ENCODE measurements at regions of chr12 and their contacts with region 1.

Region 1: DNA sequence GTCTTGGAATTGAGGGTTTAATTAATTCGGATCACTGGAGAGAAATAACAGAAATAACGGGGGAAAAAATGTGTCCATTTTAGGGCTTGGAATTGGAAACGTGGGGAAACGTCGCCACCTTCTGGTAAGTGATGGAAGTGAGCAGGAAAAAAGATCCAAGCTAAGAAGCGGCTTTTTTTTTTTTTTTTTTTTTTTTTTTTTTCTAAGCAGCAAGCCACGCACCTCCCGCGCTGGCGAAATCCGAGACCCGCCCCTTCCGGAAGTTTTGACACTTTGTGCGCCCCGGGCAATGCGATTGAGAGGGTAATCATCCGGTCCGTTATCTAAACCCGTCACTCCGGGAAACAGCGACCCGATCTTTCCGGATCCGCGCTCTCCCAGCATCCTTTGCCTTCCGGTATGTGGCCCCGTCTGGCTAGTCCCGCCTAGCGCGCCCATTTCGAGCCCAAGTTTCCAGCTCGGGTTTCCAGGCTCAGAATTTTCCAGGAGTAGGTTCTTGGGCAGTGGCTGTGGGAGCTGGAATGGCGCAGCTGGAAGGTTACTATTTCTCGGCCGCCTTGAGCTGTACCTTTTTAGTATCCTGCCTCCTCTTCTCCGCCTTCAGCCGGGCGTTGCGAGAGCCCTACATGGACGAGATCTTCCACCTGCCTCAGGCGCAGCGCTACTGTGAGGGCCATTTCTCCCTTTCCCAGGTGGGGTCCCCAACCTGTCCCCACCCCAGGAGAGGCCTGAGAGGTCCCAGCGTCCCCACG is at the start of gene ALG10:
- DNase-seq: peak; percentile 97
- H3K4me3 ChIP-seq: peak within 1 kb of the TSS; percentile 52 to 94 (median 78)
- H3K27ac ChIP-seq: peak within 1 kb of the TSS; percentile 77
- H3K4me1 ChIP-seq: peaks cover 5% of the 10 kb centered on the region
- H3K27me3 ChIP-seq: no peaks in the 10 kb centered on the region
- CTCF ChIP-seq: peak; percentile 52 to 62
- total RNA-seq, gene ALG10: 12.6 to 18.7 TPM

Region 2: DNA sequence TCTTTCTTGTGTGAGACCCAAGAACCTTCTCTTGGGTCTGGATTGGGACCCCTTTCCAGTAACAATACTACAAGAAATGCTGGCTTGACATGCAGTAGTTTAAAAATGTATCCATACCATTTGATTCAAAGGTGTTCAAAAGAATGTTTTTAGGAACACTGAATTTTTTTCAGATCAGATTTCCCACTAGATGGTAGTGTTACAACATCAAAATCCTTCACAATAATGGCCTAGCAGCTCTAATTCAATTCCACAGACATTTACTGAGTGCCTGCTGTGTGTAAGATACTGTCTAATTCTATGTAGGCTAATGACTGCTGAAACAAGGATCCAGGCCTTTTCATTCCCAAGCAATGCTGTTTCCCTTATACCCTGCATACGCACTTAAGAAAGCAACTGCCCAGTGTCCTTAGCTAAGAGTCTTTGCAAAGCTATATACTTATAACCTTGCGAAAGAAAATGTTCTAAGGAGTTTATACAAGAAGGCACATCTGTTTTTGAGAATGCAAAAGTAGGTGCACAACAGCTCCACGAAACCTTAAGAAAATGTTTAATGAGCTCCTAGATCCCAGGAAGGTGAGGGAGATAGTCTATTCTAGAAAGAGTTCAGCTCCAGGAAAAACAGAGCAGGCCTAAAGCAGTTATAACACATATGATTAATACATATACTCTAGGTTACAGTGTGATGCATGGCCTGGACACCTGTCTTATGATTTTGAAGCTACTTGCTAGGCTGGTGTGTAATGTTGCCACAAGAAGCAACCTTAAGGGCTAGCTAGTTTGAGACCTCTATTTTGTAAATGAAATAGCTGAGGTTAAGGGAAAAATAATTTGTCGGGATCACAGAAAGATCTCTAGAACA is 1074.8 kb before region 1 on chr12:
- CTCF ChIA-PET with region 1: interaction called, 10 read pairs
- dilution Hi-C with region 1: no loop called
- in situ Hi-C with region 1: loop called (anchors 25 kb)
- intact Hi-C with region 1: loop called (anchors 1 kb)
- DNase-seq: peak; percentile 34
- H3K4me3 ChIP-seq: no peak overlapping the region
- H3K27ac ChIP-seq: no peak overlapping the region
- H3K4me1 ChIP-seq: peaks cover 11% of the 10 kb centered on the region
- H3K27me3 ChIP-seq: no peaks in the 10 kb centered on the region
- CTCF ChIP-seq: peak; percentile 10 to 36

Region 3: GRCh38 chr12:33427072-33427471 is 595.2 kb before region 1 on chr12:
- CTCF ChIA-PET with region 1: no interaction called
- dilution Hi-C with region 1: no loop called
- in situ Hi-C with region 1: loop called in 1 of 2 experiments (anchors 10 kb)
- intact Hi-C with region 1: loop called (anchors 1 kb)
- DNase-seq: peak; percentile 45
- H3K4me3 ChIP-seq: no peak overlapping the region
- H3K27ac ChIP-seq: no peak overlapping the region
- H3K4me1 ChIP-seq: no peaks in the 10 kb centered on the region
- H3K27me3 ChIP-seq: peaks cover 2% of the 10 kb centered on the region
- CTCF ChIP-seq: peak; percentile 50 to 63

Region 4: GRCh38 chr12:33546006-33546405 is 476.2 kb before region 1 on chr12:
- CTCF ChIA-PET with region 1: no interaction called
- dilution Hi-C with region 1: no loop called
- in situ Hi-C with region 1: no loop called
- intact Hi-C with region 1: no loop called
- DNase-seq: no peak
- H3K4me3 ChIP-seq: no peak overlapping the region
- H3K27ac ChIP-seq: no peak overlapping the region
- H3K4me1 ChIP-seq: no peaks in the 10 kb centered on the region
- H3K27me3 ChIP-seq: no peaks in the 10 kb centered on the region
- CTCF ChIP-seq: no peak

Region 5: DNA sequence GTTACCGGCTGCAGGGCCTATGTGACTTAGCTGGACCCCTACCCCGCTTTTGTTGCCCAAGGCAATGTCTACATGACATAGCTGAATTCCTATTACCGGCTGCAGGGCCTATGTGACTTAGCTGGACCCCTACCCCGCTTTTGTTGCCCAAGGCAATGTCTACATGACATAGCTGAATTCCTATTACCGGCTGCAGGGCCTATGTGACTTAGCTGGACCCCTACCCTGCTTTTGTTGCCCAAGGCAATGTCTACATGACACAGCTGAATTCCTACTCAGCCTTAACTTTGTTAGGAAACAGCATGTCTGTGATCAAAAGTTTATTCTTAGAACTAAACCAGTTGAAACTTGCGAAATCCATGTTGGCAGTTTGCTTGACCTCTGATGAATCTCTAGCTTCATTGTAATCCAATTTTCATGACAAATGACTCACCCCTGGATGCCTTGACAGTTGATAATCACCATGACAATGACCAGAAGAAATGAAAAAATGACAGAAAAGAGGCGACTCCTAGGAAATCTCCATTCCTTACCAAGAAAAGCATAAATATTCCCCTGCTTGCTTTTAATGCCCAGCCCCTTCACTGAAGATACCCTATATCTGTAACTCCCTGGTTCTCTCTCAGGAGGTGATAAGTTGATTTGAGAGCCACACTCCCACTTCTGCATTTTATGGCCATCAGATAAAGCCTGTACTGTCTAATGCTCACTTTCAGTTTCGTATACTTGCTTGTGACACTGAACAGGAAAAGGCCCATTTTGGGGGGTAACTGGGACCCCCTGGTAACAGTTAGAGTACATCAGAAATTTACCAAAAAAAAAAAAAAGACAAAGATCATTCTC is 434.2 kb before region 1 on chr12:
- CTCF ChIA-PET with region 1: no interaction called
- dilution Hi-C with region 1: no loop called
- in situ Hi-C with region 1: loop called in 1 of 2 experiments (anchors 25 kb)
- intact Hi-C with region 1: no loop called
- DNase-seq: peak; percentile 93
- H3K4me3 ChIP-seq: no peak overlapping the region
- H3K27ac ChIP-seq: peak overlapping the region; percentile 78
- H3K4me1 ChIP-seq: peaks cover 26% of the 10 kb centered on the region
- H3K27me3 ChIP-seq: no peaks in the 10 kb centered on the region
- CTCF ChIP-seq: no peak

Region 6: GRCh38 chr12:33605751-33606150 is 416.5 kb before region 1 on chr12:
- CTCF ChIA-PET with region 1: no interaction called
- dilution Hi-C with region 1: no loop called
- in situ Hi-C with region 1: no loop called
- intact Hi-C with region 1: loop called (anchors 5 kb)
- DNase-seq: peak; percentile 30
- H3K4me3 ChIP-seq: no peak overlapping the region
- H3K27ac ChIP-seq: no peak overlapping the region
- H3K4me1 ChIP-seq: no peaks in the 10 kb centered on the region
- H3K27me3 ChIP-seq: no peaks in the 10 kb centered on the region
- CTCF ChIP-seq: peak; percentile 51 to 71

Region 7: DNA sequence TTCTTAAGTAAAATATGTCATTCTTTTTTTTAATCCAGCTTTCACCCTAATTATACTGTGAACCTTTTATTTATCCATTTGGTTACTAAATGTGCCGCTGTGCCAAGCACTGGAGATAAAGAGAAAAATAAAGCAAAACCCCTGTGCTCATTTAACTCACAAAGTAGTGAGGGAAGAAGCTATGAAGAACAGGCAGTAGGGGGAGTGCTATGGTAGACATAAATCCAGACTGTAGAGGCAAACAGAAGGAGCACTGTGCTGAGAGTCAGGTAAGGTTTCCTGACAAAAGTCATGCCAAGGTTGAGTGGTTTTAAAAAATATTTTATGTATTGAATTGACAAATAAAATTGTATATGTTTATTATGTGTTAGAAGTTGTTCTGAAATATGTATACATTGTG is 394.2 kb before region 1 on chr12:
- CTCF ChIA-PET with region 1: no interaction called
- dilution Hi-C with region 1: no loop called
- in situ Hi-C with region 1: loop called in 1 of 2 experiments (anchors 25 kb)
- intact Hi-C with region 1: loop called (anchors 1 kb)
- DNase-seq: peak; percentile 14
- H3K4me3 ChIP-seq: no peak overlapping the region
- H3K27ac ChIP-seq: no peak overlapping the region
- H3K4me1 ChIP-seq: no peaks in the 10 kb centered on the region
- H3K27me3 ChIP-seq: no peaks in the 10 kb centered on the region
- CTCF ChIP-seq: peak; percentile 16 to 49

Region 8: DNA sequence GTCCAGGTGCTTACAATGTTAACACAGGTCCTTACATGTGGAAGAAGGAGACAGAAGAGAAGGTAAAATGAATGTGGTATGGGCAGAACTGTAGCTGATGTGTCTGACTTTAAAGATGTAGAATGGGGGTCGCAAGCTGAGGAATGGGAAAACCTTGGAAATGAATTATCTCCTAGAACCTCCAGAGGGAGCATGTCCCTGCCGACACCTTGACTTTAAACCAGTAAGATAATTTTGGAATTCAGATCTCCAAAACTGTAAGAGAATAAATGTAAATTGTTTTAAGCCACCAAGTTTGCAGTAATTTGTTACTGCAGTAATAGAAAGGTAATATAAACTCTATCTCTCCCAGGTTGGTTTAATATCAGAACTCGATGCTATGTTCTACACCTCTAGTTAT is 80.1 kb before region 1 on chr12:
- CTCF ChIA-PET with region 1: no interaction called
- dilution Hi-C with region 1: no loop called
- in situ Hi-C with region 1: no loop called
- intact Hi-C with region 1: loop called (anchors 5 kb)
- DNase-seq: no peak
- H3K4me3 ChIP-seq: no peak overlapping the region
- H3K27ac ChIP-seq: no peak overlapping the region
- H3K4me1 ChIP-seq: no peaks in the 10 kb centered on the region
- H3K27me3 ChIP-seq: no peaks in the 10 kb centered on the region
- CTCF ChIP-seq: peak; percentile 25 to 37

Region 9: DNA sequence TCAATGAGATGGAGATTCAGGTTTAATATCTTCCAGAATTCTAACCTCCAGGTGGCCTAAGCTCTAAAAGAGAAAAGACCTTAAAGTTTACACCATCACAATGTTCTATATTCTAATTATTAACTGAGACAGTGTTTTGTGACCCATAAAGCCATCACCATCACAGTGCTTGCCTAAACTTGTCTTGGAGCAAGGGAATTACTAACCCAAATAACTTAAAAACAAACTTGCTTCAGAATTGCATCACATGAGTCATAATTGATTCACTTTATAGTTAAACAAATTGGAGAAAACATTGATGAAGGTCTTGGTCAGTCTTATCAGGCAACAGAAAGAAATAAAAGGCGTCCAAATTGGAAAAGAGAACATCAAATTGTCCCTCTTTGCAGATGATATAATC is 54.5 kb before region 1 on chr12:
- CTCF ChIA-PET with region 1: no interaction called
- dilution Hi-C with region 1: no loop called
- in situ Hi-C with region 1: no loop called
- intact Hi-C with region 1: no loop called
- DNase-seq: peak; percentile 79
- H3K4me3 ChIP-seq: no peak overlapping the region
- H3K27ac ChIP-seq: peak overlapping the region; percentile 4
- H3K4me1 ChIP-seq: peaks cover 6% of the 10 kb centered on the region
- H3K27me3 ChIP-seq: no peaks in the 10 kb centered on the region
- CTCF ChIP-seq: no peak

Region 10: GRCh38 chr12:34046570-34046969 is 24.3 kb after region 1 on chr12:
- CTCF ChIA-PET with region 1: no interaction called
- dilution Hi-C with region 1: no loop called
- in situ Hi-C with region 1: no loop called
- intact Hi-C with region 1: no loop called
- DNase-seq: no peak
- H3K4me3 ChIP-seq: no peak overlapping the region
- H3K27ac ChIP-seq: no peak overlapping the region
- H3K4me1 ChIP-seq: no peaks in the 10 kb centered on the region
- H3K27me3 ChIP-seq: no peaks in the 10 kb centered on the region
- CTCF ChIP-seq: no peak

Region 11: GRCh38 chr12:34306133-34306830 is 284.0 kb after region 1 on chr12:
- CTCF ChIA-PET with region 1: no interaction called
- dilution Hi-C with region 1: no loop called
- in situ Hi-C with region 1: no loop called
- intact Hi-C with region 1: no loop called
- DNase-seq: no peak
- H3K4me3 ChIP-seq: no peak overlapping the region
- H3K27ac ChIP-seq: no peak overlapping the region
- H3K4me1 ChIP-seq: no peaks in the 10 kb centered on the region
- H3K27me3 ChIP-seq: no peaks in the 10 kb centered on the region
- CTCF ChIP-seq: no peak